Activated CD4-positive, alpha-beta memory T cell treated with anti-CD3 and anti-CD28 coated beads for 36 hours (primary cell): ENCODE measurements at regions of chr3 and their contacts with region 1.

Region 1: DNA sequence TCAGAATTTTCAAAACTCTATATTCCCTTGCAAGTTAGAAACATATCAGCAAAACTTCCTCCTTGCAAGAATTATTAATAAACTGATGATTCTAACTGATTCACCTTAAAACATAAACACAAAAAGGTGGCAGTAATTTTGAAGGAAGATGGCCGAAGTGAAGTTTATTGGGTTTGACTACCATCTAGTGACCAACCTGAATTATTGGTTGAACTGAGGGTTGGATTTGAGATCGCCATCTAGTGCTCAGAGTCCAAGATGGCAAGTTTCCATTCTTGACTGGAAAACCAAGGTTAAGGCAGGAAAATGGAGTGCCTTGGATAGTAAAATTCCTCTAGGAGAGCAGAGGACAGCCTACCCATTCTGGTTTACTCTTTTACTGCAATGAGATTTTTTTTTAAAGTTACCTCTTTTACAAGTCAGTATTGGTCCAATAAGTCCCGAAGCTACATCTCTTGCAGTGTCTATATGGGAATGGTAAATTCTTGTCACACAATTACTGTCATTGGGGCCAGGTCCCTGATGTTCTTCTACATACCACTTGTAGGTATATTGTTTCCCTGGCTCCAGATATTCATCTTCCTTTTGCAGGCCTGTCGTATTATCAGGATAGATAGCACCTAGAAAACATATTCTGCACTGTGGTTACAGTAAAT is 51.6 kb upstream of the CP start:
- DNase-seq: peak; percentile 26
- H3K4me3 Mint-ChIP-seq: no peak overlapping the region
- H3K27ac Mint-ChIP-seq: no peak overlapping the region
- H3K4me1 Mint-ChIP-seq: peaks cover 9% of the 10 kb centered on the region
- H3K27me3 Mint-ChIP-seq: no peaks in the 10 kb centered on the region

Region 2: GRCh38 chr3:149120051-149120972 is 152.9 kb before region 1 on chr3:
- CTCF ChIA-PET with region 1: interaction called, 107 read pairs
- POLR2A ChIA-PET with region 1: no interaction called
- intact Hi-C with region 1: loop called (anchors 1 kb)
- DNase-seq: no peak
- H3K4me3 Mint-ChIP-seq: no peak overlapping the region
- H3K27ac Mint-ChIP-seq: no peak overlapping the region
- H3K4me1 Mint-ChIP-seq: no peaks in the 10 kb centered on the region
- H3K27me3 Mint-ChIP-seq: peaks cover 4% of the 10 kb centered on the region

Region 3: GRCh38 chr3:149363053-149363452 is 89.8 kb after region 1 on chr3:
- CTCF ChIA-PET with region 1: no interaction called
- POLR2A ChIA-PET with region 1: no interaction called
- intact Hi-C with region 1: no loop called
- DNase-seq: no peak
- H3K4me3 Mint-ChIP-seq: no peak overlapping the region
- H3K27ac Mint-ChIP-seq: no peak overlapping the region
- H3K4me1 Mint-ChIP-seq: peaks cover 6% of the 10 kb centered on the region
- H3K27me3 Mint-ChIP-seq: peaks cover 10% of the 10 kb centered on the region